CD4-positive, alpha-beta memory T cell (primary cell): ENCODE measurements at regions of chr22 and their contacts with region 1.

Region 1: GRCh38 chr22:37148742-37149665 is 712 bp downstream of the IL2RB start:
- DNase-seq: peak in 1 of 5 donors; percentile 44
- H3K4me3 ChIP-seq: peak overlapping the region; percentile 72
- H3K4me3 Mint-ChIP-seq: peak overlapping the region; percentile 88 to 96 (median 92)
- H3K27ac ChIP-seq: peak overlapping the region; percentile 95
- H3K27ac Mint-ChIP-seq: peak overlapping the region; percentile 96 to 100 (median 98)
- H3K4me1 ChIP-seq: peaks cover 63% of the 10 kb centered on the region
- H3K4me1 Mint-ChIP-seq: peaks cover 43 to 74% (median 58%) of the 10 kb centered on the region in 4 donors
- H3K27me3 ChIP-seq: no peaks in the 10 kb centered on the region
- H3K27me3 Mint-ChIP-seq: peaks cover 0 to 4% of the 10 kb centered on the region in 2 donors

Region 2: GRCh38 chr22:37077884-37078485 is 71.0 kb before region 1 on chr22:
- CTCF ChIA-PET with region 1: interaction called, 15 read pairs
- POLR2A ChIA-PET with region 1: interaction called, 37 read pairs
- intact Hi-C with region 1: loop called (anchors 1 kb)
- DNase-seq: peak; percentile 76 to 85 (median 81)
- H3K4me3 ChIP-seq: no peak overlapping the region
- H3K4me3 Mint-ChIP-seq: peak overlapping the region in 7 of 8 donors; percentile 2 to 73 (median 58)
- H3K27ac ChIP-seq: peak overlapping the region; percentile 44
- H3K27ac Mint-ChIP-seq: peak overlapping the region; percentile 93 to 100 (median 99)
- H3K4me1 ChIP-seq: peaks cover 34% of the 10 kb centered on the region
- H3K4me1 Mint-ChIP-seq: peaks cover 26 to 52% (median 39%) of the 10 kb centered on the region in 4 donors
- H3K27me3 ChIP-seq: no peaks in the 10 kb centered on the region
- H3K27me3 Mint-ChIP-seq: peaks cover 4 to 5% of the 10 kb centered on the region in 2 donors

Region 3: GRCh38 chr22:37121887-37122591 is 27.0 kb before region 1 on chr22:
- CTCF ChIA-PET with region 1: interaction called, 55 read pairs
- POLR2A ChIA-PET with region 1: interaction called, 217 read pairs
- intact Hi-C with region 1: loop called (anchors 1 kb)
- DNase-seq: peak; percentile 92 to 99 (median 95)
- H3K4me3 ChIP-seq: peak overlapping the region in 1 of 2 donors; percentile 36
- H3K4me3 Mint-ChIP-seq: peak overlapping the region; percentile 76 to 90 (median 84)
- H3K27ac ChIP-seq: peak overlapping the region; percentile 98
- H3K27ac Mint-ChIP-seq: peak overlapping the region; percentile 98 to 100 (median 99)
- H3K4me1 ChIP-seq: peaks cover 58% of the 10 kb centered on the region
- H3K4me1 Mint-ChIP-seq: peaks cover 39 to 75% (median 54%) of the 10 kb centered on the region in 4 donors
- H3K27me3 ChIP-seq: no peaks in the 10 kb centered on the region
- H3K27me3 Mint-ChIP-seq: no peaks in the 10 kb centered on the region

Region 4: DNA sequence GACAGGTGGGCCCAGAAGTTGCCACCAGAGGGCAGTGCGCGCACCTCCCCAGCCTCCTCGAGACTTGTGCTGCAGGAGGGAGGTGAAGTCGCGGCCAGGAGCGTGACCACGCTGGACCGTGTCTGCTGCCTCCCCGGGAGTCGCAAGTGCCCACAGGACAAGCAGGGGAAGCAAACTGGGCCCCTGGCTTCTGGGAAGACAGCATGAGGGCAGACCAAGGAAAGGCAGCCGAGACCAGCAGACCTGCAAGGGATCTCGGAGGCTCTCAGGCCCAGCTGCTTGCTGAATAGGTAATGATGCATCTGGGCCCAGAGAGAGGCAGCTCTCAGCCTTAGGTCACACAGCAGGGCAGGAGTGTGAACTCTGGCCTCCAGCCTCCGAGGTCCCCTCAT is 17.7 kb after region 1 on chr22:
- CTCF ChIA-PET with region 1: interaction called, 134 read pairs
- POLR2A ChIA-PET with region 1: interaction called, 133 read pairs
- intact Hi-C with region 1: loop called (anchors 1 kb)
- DNase-seq: peak; percentile 73 to 82 (median 78)
- H3K4me3 ChIP-seq: peak overlapping the region; percentile 15 to 18
- H3K4me3 Mint-ChIP-seq: peak overlapping the region; percentile 75 to 90 (median 86)
- H3K27ac ChIP-seq: peak overlapping the region; percentile 37
- H3K27ac Mint-ChIP-seq: peak overlapping the region; percentile 85 to 98 (median 93)
- H3K4me1 ChIP-seq: peaks cover 90% of the 10 kb centered on the region
- H3K4me1 Mint-ChIP-seq: peaks cover 63 to 95% (median 78%) of the 10 kb centered on the region in 4 donors
- H3K27me3 ChIP-seq: no peaks in the 10 kb centered on the region
- H3K27me3 Mint-ChIP-seq: no peaks in the 10 kb centered on the region

Region 5: DNA sequence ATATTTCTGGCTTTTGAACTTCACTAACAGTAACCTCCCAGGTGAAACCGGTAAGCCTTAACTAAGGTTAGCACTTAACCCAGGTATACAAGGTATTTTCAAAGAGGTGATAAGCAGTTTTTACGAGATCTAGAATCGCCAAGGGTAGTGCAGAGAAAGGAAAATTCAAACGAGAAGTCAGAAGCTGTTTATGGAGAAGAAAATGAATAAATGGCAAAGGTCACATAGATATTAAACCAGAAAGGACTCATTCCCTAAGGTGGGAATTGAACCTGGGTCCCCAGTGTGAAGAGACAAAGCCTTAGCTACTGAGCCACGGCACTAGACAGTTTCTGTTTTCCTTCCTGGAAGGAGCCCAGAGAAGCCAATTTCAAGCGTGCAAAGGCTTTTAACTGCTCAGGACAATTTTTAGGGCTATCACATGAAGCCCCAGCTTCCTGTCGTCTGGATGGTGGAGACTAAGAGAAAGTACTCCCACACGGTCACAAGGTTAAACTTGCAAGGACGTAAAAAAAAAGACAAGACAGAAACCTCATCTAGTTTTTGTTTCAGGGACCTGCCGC is 44.7 kb after region 1 on chr22:
- CTCF ChIA-PET with region 1: interaction called, 32 read pairs
- POLR2A ChIA-PET with region 1: interaction called, 51 read pairs
- intact Hi-C with region 1: no loop called
- DNase-seq: peak; percentile 41 to 63 (median 45)
- H3K4me3 ChIP-seq: no peak overlapping the region
- H3K4me3 Mint-ChIP-seq: peak overlapping the region; percentile 49 to 82 (median 60)
- H3K27ac ChIP-seq: peak overlapping the region; percentile 17
- H3K27ac Mint-ChIP-seq: peak overlapping the region; percentile 68 to 95 (median 90)
- H3K4me1 ChIP-seq: peaks cover 51% of the 10 kb centered on the region
- H3K4me1 Mint-ChIP-seq: peaks cover 18 to 55% (median 33%) of the 10 kb centered on the region in 4 donors
- H3K27me3 ChIP-seq: no peaks in the 10 kb centered on the region
- H3K27me3 Mint-ChIP-seq: no peaks in the 10 kb centered on the region

Region 6: GRCh38 chr22:37229805-37230672 is 81.0 kb after region 1 on chr22:
- CTCF ChIA-PET with region 1: interaction called, 5 read pairs
- POLR2A ChIA-PET with region 1: interaction called, 35 read pairs
- intact Hi-C with region 1: no loop called
- DNase-seq: peak; percentile 87 to 97 (median 88)
- H3K4me3 ChIP-seq: peak overlapping the region; percentile 48 to 51
- H3K4me3 Mint-ChIP-seq: peak overlapping the region; percentile 75 to 88 (median 82)
- H3K27ac ChIP-seq: peak overlapping the region; percentile 97
- H3K27ac Mint-ChIP-seq: peak overlapping the region; percentile 87 to 100 (median 100)
- H3K4me1 ChIP-seq: peaks cover 96% of the 10 kb centered on the region
- H3K4me1 Mint-ChIP-seq: peaks cover 67 to 92% (median 83%) of the 10 kb centered on the region in 4 donors
- H3K27me3 ChIP-seq: no peaks in the 10 kb centered on the region
- H3K27me3 Mint-ChIP-seq: no peaks in the 10 kb centered on the region